Pancreas (tissue), 10 donors: ENCODE measurements at regions of chr12 and their contacts with region 1.

Region 1: GRCh38 chr12:121110211-121110940 is 22.3 kb upstream of the P2RX7 start:
- DNase-seq: peak in 5 of 6 donors; percentile 28 to 71 (median 57)
- ATAC-seq: peak; percentile 80 to 96 (median 92)
- H3K4me3 ChIP-seq: no peak overlapping the region
- H3K27ac ChIP-seq: no peak overlapping the region
- H3K4me1 ChIP-seq: no peaks in the 10 kb centered on the region
- H3K27me3 ChIP-seq: no peaks in the 10 kb centered on the region
- CTCF ChIP-seq: peak; percentile 88 to 94 (median 90)

Region 2: DNA sequence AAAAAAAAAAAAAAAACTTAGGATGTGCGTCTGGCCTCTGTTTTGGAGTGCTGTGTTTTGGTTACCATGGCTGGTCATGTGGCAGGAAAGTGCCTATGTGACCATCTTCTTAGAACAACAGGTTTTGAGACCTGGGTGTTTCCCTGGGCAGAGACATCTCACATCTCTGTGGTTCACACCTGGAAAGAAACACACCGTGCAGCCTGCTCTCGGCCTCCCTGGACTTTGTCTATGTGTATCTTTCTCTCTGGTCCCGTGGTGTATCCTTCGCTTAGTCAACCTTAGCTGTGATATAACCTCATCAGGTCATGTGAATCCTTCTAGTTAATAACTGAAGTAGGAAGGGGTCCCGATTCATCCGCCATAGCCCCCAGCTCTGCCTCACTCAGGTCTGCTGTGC is 362.1 kb before region 1 on chr12:
- intact Hi-C with region 1: no loop called
- DNase-seq: no peak
- ATAC-seq: no peak
- H3K4me3 ChIP-seq: no peak overlapping the region
- H3K27ac ChIP-seq: no peak overlapping the region
- H3K4me1 ChIP-seq: no peaks in the 10 kb centered on the region
- H3K27me3 ChIP-seq: no peaks in the 10 kb centered on the region
- CTCF ChIP-seq: no peak

Region 3: GRCh38 chr12:121061831-121062230 is 48.5 kb before region 1 on chr12:
- intact Hi-C with region 1: no loop called
- DNase-seq: no peak
- ATAC-seq: no peak
- H3K4me3 ChIP-seq: no peak overlapping the region
- H3K27ac ChIP-seq: no peak overlapping the region
- H3K4me1 ChIP-seq: no peaks in the 10 kb centered on the region
- H3K27me3 ChIP-seq: no peaks in the 10 kb centered on the region
- CTCF ChIP-seq: no peak

Region 4: DNA sequence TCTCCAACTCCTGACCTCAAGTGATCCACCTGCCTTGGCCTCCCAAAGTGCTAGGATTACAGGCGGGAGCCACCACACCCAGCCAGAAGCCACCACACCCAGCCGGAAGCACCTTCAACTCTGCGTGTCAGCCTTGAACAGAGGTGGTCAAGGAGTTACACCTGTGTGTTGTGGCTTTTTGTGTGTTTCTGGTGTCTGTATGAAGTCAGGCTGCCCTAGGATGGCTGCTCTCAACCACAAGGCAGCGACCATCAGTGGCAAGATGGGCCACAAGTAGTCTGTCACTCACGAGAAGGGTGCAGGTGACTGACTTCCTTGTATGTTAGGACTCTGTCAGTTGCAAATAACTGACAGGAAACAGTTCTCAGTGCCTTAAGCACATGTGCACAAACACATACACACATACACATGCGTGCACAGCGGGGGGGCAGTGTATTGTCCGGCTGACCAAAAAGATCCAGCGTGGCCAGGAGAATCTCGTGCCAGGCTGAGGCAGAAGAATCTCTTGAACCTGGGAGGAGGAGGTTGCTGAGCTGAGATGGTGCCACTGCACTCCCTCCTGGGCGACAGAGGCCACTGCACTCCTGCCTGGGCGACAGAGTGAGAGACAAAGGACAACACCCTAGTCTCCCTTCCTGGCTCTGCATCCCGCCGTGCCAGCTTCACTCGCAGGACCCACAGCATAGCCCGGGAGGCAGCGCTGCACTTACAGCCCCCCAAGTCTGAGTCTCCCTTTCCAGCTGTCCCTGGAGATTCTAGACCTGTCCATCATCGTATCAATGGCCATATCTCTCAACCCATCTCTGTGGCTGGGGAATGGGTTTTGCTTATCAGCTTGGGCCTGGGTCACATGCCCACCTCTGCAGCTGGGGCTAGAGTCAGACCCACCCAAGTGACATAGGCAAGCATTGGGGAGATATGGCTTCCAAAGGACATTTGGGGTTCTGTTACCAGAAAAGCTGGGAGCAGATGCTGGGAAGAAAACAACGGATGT is 113.2 kb after region 1 on chr12:
- intact Hi-C with region 1: loop called in 1 of 3 experiments (anchors 10 kb)
- DNase-seq: peak in 2 of 6 donors; percentile 24 to 74
- ATAC-seq: peak in 3 of 4 donors; percentile 31 to 52 (median 45)
- H3K4me3 ChIP-seq: no peak overlapping the region
- H3K27ac ChIP-seq: no peak overlapping the region
- H3K4me1 ChIP-seq: peaks cover 19 to 24% (median 21%) of the 10 kb centered on the region in 3 donors
- H3K27me3 ChIP-seq: no peaks in the 10 kb centered on the region
- CTCF ChIP-seq: peak in 1 of 4 donors; percentile 21

Region 5: DNA sequence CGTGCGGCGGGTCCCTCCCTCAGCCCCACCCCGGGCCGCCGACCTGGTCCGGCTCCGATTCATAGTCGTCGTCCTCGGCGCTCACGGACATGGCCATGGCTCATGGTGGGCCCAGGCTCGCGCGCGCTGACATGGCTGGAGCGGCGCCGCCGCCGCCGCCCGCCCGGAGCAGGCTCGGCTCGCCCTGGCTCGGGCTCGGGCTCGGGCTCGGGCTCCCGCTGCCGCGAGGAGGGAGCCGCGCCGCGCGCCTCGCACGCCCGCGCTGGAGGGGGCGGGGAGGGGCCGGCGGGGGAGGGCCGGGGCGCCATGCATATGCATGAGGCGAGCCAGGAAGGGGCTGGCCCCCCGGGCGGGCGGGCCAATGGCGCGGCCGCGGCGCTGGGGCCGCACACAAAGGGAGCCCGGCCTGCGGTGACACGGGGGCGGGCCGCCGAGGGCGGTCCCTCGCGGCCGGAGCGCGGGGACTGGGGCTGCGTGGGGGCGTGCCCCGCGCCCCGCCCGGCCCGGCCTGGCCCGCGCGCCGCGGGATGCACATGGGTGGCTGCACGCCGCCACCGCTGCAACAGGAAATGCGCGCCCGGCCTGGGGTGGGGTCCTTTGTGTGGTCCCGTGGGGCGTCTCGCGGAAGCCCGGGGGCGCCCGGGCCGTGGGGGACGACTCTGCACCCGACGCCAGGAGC is 356.9 kb after region 1 on chr12:
- intact Hi-C with region 1: no loop called
- DNase-seq: peak; percentile 91 to 96 (median 92)
- ATAC-seq: peak; percentile 93 to 95 (median 94)
- H3K4me3 ChIP-seq: peak overlapping the region; percentile 42 to 65 (median 62)
- H3K27ac ChIP-seq: peak overlapping the region in 3 of 4 donors; percentile 52 to 74 (median 72)
- H3K4me1 ChIP-seq: peaks cover 2 to 12% (median 9%) of the 10 kb centered on the region in 3 donors
- H3K27me3 ChIP-seq: no peaks in the 10 kb centered on the region
- CTCF ChIP-seq: no peak